ENCODE measurements at regions of chr11 and their contacts with region 1.

Region 1: GRCh38 chr11:34357701-34358257 is at the start of gene ABTB2:
- DNase-seq: peak; percentile 90 to 97 (median 97)
- ATAC-seq: peak; percentile 96
- H3K4me3 ChIP-seq: peak within 1 kb of the TSS; percentile 67
- H3K4me3 Mint-ChIP-seq: peak within 1 kb of the TSS; percentile 81 to 96 (median 88)
- H3K27ac ChIP-seq: peak within 1 kb of the TSS; percentile 55
- H3K27ac Mint-ChIP-seq: peak within 1 kb of the TSS; percentile 28 to 94 (median 90)
- H3K4me1 ChIP-seq: peaks cover 8 to 10% of the 10 kb centered on the region in 2 donors
- H3K4me1 Mint-ChIP-seq: peaks cover 8 to 28% (median 21%) of the 10 kb centered on the region in 7 donors
- H3K27me3 ChIP-seq: peaks cover 7 to 13% of the 10 kb centered on the region in 2 donors
- H3K27me3 Mint-ChIP-seq: peaks cover 26 to 59% (median 36%) of the 10 kb centered on the region in 5 donors
- total RNA-seq, gene ABTB2: 0.22 to 5.3 (median 0.61) TPM

Region 2: DNA sequence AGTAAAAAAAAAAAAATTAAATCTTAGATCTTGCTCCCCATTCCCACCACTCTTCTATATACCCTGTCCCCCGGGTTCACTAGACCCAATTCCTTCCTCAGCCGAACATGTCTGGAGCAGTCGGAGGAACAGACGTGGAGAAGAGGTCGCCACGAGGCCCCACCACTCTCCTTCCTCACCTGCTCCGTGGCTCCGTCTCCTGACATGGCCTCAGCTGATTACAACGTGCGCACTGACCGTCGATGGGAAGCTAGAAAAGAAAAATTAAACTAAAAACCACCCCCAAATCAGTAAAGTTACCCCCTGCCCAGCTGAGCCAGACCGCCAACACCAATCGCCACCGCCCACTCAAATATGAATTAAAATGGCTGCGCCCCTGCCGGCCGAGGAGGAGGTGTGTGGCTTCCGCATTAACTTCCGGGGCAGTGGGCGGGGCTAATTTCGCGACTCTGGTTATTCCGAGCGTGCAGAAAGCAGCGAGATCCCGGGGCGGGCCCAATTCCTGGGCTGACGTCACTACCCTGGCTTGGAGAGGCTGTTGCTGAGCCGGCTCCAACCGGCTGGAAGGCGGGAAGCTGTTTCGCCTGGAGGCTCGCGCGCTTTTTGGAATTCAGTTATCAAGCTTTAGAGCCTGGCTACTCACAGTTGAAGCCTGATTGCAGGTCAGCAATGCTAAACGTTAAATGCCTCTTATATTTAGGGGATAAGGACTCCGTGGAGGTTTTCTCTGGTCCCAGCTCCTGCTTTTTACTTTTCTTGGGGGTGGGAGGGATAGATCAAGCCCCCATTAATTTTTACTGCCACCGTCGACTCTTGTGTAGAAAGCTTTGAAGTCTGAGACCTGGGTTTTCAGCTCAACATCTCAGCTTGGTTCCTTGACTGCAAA is 1196.4 kb before region 1 on chr11 and contains the start of gene CSTF3:
- CTCF ChIA-PET with region 1: no interaction called
- POLR2A ChIA-PET with region 1: no interaction called
- intact Hi-C with region 1: loop called in 1 of 2 experiments (anchors 2 kb)
- DNase-seq: peak; percentile 84 to 95 (median 89)
- ATAC-seq: peak; percentile 98
- H3K4me3 ChIP-seq: peak within 1 kb of the TSS; percentile 97
- H3K4me3 Mint-ChIP-seq: peak within 1 kb of the TSS; percentile 95 to 100 (median 100)
- H3K27ac ChIP-seq: peak within 1 kb of the TSS; percentile 84
- H3K27ac Mint-ChIP-seq: peak within 1 kb of the TSS; percentile 95 to 100 (median 99)
- H3K4me1 ChIP-seq: peaks cover 11 to 19% of the 10 kb centered on the region in 2 donors
- H3K4me1 Mint-ChIP-seq: peaks cover 40 to 64% (median 55%) of the 10 kb centered on the region in 7 donors
- H3K27me3 ChIP-seq: no peaks in the 10 kb centered on the region
- H3K27me3 Mint-ChIP-seq: no peaks in the 10 kb centered on the region
- total RNA-seq, gene CSTF3: 14.6 to 38.6 (median 28.7) TPM

Region 3: DNA sequence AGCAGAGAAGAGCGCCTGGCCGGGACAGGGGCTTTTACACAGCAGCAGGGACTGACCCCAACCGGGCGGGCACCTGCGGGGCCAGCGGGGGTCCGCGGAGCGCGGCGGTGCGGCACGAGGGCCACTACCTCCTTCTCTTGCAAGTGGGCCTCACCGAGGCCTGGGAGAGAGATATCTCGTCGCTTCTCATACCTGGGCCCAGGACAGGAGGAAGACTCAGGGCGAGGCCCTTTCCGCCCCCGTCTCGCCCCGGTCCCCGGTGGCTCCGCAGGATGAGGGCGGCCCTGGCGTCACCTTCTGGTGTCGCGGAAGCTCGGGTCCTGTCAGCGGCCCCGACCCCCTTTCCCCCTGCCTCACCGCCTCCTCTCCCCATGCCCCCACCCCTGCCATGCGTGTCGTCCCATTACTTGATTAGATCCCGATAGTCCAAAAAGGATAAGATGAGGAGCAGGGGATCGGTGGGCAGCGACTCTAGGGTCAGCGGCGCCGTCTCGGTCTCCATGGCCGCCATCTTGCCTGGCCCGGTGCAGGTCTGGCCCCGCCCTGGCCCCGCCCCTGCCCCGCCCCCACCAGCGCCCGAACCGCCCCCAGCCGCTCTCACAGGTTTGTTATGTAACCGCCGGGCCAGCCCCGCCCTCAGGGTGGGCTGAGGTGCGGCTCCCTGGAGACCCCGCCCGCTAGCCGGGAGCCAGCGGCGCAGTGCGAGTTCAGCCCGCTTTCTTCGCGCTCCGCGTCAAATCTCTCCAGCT is 583.6 kb before region 1 on chr11 and contains the start of gene FBXO3:
- CTCF ChIA-PET with region 1: no interaction called
- POLR2A ChIA-PET with region 1: no interaction called
- intact Hi-C with region 1: loop called (anchors 1 kb)
- DNase-seq: peak; percentile 71 to 91 (median 88)
- ATAC-seq: peak; percentile 98
- H3K4me3 ChIP-seq: peak within 1 kb of the TSS; percentile 91
- H3K4me3 Mint-ChIP-seq: peak within 1 kb of the TSS; percentile 93 to 99 (median 97)
- H3K27ac ChIP-seq: peak within 1 kb of the TSS; percentile 83
- H3K27ac Mint-ChIP-seq: peak within 1 kb of the TSS; percentile 93 to 98 (median 96)
- H3K4me1 ChIP-seq: peaks cover 20 to 23% of the 10 kb centered on the region in 2 donors
- H3K4me1 Mint-ChIP-seq: peaks cover 33 to 58% (median 45%) of the 10 kb centered on the region in 7 donors
- H3K27me3 ChIP-seq: no peaks in the 10 kb centered on the region
- H3K27me3 Mint-ChIP-seq: peaks cover 0 to 34% (median 7%) of the 10 kb centered on the region in 5 donors
- total RNA-seq, gene FBXO3: 22.6 to 55.7 (median 47.7) TPM

Region 4: GRCh38 chr11:34051349-34052035 is 306.3 kb before region 1 on chr11 and contains the start of gene CAPRIN1:
- CTCF ChIA-PET with region 1: no interaction called
- POLR2A ChIA-PET with region 1: interaction called, 5 read pairs
- intact Hi-C with region 1: loop called (anchors 1 kb)
- DNase-seq: peak; percentile 78 to 92 (median 89)
- ATAC-seq: peak; percentile 87
- H3K4me3 ChIP-seq: peak within 1 kb of the TSS; percentile 95
- H3K4me3 Mint-ChIP-seq: peak within 1 kb of the TSS; percentile 94 to 99 (median 98)
- H3K27ac ChIP-seq: peak within 1 kb of the TSS; percentile 99
- H3K27ac Mint-ChIP-seq: peak within 1 kb of the TSS; percentile 94 to 99 (median 97)
- H3K4me1 ChIP-seq: peaks cover 21 to 27% of the 10 kb centered on the region in 2 donors
- H3K4me1 Mint-ChIP-seq: peaks cover 3 to 42% (median 30%) of the 10 kb centered on the region in 7 donors
- H3K27me3 ChIP-seq: no peaks in the 10 kb centered on the region
- H3K27me3 Mint-ChIP-seq: peaks cover 0 to 6% (median 0%) of the 10 kb centered on the region in 5 donors
- total RNA-seq, gene CAPRIN1: 120 to 227 (median 163) TPM

Region 5: GRCh38 chr11:34204396-34205279 is 153.1 kb before region 1 on chr11:
- CTCF ChIA-PET with region 1: no interaction called
- POLR2A ChIA-PET with region 1: no interaction called
- intact Hi-C with region 1: loop called in 1 of 2 experiments (anchors 1 kb)
- DNase-seq: no peak
- ATAC-seq: no peak
- H3K4me3 ChIP-seq: no peak overlapping the region
- H3K4me3 Mint-ChIP-seq: no peak overlapping the region
- H3K27ac ChIP-seq: no peak overlapping the region
- H3K27ac Mint-ChIP-seq: no peak overlapping the region
- H3K4me1 ChIP-seq: peaks cover 0 to 8% of the 10 kb centered on the region in 2 donors
- H3K4me1 Mint-ChIP-seq: peaks cover 6 to 41% (median 16%) of the 10 kb centered on the region in 7 donors
- H3K27me3 ChIP-seq: no peaks in the 10 kb centered on the region
- H3K27me3 Mint-ChIP-seq: no peaks in the 10 kb centered on the region

Region 6: GRCh38 chr11:34423300-34424072 is 65.7 kb after region 1 on chr11:
- CTCF ChIA-PET with region 1: no interaction called
- POLR2A ChIA-PET with region 1: no interaction called
- intact Hi-C with region 1: no loop called
- DNase-seq: no peak
- ATAC-seq: no peak
- H3K4me3 ChIP-seq: no peak overlapping the region
- H3K4me3 Mint-ChIP-seq: no peak overlapping the region
- H3K27ac ChIP-seq: no peak overlapping the region
- H3K27ac Mint-ChIP-seq: peak overlapping the region in 1 of 9 donors; percentile 59
- H3K4me1 ChIP-seq: no peaks in the 10 kb centered on the region
- H3K4me1 Mint-ChIP-seq: peaks cover 0 to 6% (median 4%) of the 10 kb centered on the region in 7 donors
- H3K27me3 ChIP-seq: no peaks in the 10 kb centered on the region
- H3K27me3 Mint-ChIP-seq: peaks cover under 1 to 40% (median 11%) of the 10 kb centered on the region in 5 donors

Region 7: DNA sequence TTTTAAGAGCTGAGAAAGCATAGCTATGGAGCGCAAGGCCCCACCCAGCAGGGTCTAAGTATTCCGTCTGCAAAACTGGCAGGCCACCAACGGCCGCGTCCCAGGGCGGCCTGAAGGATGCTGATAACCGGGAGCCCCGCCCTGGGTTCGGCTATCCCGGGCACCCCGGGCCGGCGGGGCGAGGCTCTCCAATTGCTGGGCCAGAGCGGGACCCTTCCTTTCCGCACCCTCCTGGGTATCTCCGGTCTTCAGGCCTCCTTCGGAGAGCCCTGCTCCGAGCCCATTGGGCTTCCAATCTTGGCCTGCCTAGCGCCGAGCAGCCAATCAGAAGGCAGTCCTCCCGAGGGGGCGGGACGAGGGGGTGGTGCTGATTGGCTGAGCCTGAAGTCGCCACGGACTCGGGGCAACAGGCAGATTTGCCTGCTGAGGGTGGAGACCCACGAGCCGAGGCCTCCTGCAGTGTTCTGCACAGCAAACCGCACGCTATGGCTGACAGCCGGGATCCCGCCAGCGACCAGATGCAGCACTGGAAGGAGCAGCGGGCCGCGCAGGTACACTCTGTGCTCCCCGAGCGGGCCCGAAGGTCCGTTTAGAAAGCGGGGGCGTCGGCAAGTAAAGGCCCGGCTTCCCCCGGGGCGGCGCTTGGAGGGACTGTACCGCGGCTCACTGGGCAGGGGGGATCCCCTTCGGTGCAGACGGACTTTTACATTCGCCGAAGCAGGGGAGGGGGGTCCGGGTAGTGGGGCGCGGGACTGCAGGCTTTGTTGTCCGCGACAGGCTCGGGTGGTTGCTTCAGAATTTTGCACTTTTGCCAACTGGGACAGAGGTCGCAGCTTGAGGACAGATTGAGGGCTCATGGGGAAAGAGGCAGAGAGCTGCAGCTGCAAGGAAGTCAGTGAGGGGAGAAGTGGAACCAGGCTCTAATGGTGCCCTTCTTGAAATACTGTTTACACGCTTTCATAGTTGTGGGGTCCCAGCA is 81.0 kb after region 1 on chr11 and contains the start of gene CAT:
- CTCF ChIA-PET with region 1: no interaction called
- POLR2A ChIA-PET with region 1: no interaction called
- intact Hi-C with region 1: loop called (anchors 1 kb)
- DNase-seq: peak; percentile 94 to 98 (median 97)
- ATAC-seq: peak; percentile 98
- H3K4me3 ChIP-seq: peak within 1 kb of the TSS; percentile 90
- H3K4me3 Mint-ChIP-seq: peak within 1 kb of the TSS; percentile 88 to 98 (median 96)
- H3K27ac ChIP-seq: peak within 1 kb of the TSS; percentile 79
- H3K27ac Mint-ChIP-seq: peak within 1 kb of the TSS; percentile 89 to 97 (median 93)
- H3K4me1 ChIP-seq: peaks cover 7 to 19% of the 10 kb centered on the region in 2 donors
- H3K4me1 Mint-ChIP-seq: peaks cover 21 to 47% (median 35%) of the 10 kb centered on the region in 7 donors
- H3K27me3 ChIP-seq: no peaks in the 10 kb centered on the region
- H3K27me3 Mint-ChIP-seq: no peaks in the 10 kb centered on the region
- total RNA-seq, gene CAT: 23.3 to 55.9 (median 42.6) TPM

Region 8: GRCh38 chr11:35040221-35040942 is 682.6 kb after region 1 on chr11:
- CTCF ChIA-PET with region 1: no interaction called
- POLR2A ChIA-PET with region 1: no interaction called
- intact Hi-C with region 1: no loop called
- DNase-seq: peak in 8 of 9 donors; percentile 53 to 89 (median 74)
- ATAC-seq: peak; percentile 88
- H3K4me3 ChIP-seq: peak overlapping the region; percentile 60
- H3K4me3 Mint-ChIP-seq: peak overlapping the region; percentile 74 to 94 (median 89)
- H3K27ac ChIP-seq: peak overlapping the region; percentile 86
- H3K27ac Mint-ChIP-seq: peak overlapping the region; percentile 90 to 99 (median 97)
- H3K4me1 ChIP-seq: peaks cover 29 to 45% of the 10 kb centered on the region in 2 donors
- H3K4me1 Mint-ChIP-seq: peaks cover 28 to 77% (median 68%) of the 10 kb centered on the region in 7 donors
- H3K27me3 ChIP-seq: no peaks in the 10 kb centered on the region
- H3K27me3 Mint-ChIP-seq: peaks cover 0 to 29% (median 0%) of the 10 kb centered on the region in 5 donors

Measured in naive thymus-derived CD4-positive, alpha-beta T cell (primary cell).